Posterior cingulate gyrus (tissue), 11 donors: ENCODE measurements at regions of chr13 and their contacts with region 1.

Region 1: DNA sequence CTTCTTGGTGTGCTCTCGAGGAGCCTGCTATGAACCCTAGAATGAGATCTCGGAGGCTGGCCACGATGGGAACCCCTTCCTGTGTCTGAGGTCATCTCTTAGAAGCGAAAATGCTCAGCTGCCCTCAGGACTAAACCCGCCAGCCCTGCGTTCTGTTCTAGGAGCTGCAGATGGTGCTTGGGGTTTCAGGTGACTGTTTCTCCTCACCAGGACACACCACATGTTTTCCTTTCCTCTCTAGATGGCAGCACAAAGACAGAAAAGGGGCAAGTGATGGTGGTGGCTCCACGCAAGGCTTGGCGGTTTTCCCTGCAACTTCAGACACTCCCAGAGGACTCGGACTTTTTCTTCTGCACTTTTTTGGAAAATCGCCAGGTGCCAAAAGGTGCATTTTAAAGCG is 60.1 kb downstream of the RNASEH2B start:
- DNase-seq: peak in 1 of 10 donors; percentile 78

Region 2: GRCh38 chr13:51070005-51070649 is 100.4 kb after region 1 on chr13:
- intact Hi-C with region 1: loop called (anchors 5 kb)
- DNase-seq: peak; percentile 65 to 98 (median 90)